Panc1 (cell line): ENCODE measurements at regions of chr7 and their contacts with region 1.

Region 1: DNA sequence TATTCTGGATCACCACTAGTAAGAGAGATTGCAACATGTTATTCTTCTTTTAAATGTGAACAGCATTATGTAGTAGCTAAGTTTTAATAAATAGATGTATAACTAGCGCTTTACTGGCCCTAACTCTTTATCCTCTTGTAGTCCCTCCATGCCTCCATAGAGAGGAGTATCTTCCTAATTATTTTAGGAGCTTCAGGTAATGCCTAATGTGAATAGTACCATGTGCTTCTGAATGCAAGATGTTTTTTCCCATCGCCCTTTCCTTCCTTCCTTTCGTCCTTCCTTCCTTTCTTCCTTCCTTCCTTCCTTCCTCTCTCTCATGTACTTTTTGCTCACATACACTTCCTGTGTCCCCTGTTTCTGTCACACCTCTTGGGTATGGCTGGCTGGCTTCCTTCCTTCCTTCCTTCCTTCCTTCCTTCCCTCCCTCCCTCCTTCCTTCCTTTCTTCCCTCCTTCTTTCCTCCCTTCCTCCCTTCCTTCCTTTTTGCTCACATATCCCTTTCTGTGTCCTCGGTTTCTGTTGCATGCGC is 290.7 kb downstream of the HDAC9 start:
- DNase-seq: no peak
- ATAC-seq: no peak
- H3K4me3 ChIP-seq: no peak overlapping the region
- H3K27ac ChIP-seq: no peak overlapping the region
- H3K4me1 ChIP-seq: no peaks in the 10 kb centered on the region
- H3K27me3 ChIP-seq: no peaks in the 10 kb centered on the region
- CTCF ChIP-seq: no peak

Region 2: GRCh38 chr7:18913106-18913505 is 126.8 kb after region 1 on chr7:
- CTCF ChIA-PET with region 1: no interaction called
- POLR2A ChIA-PET with region 1: interaction called, 10 read pairs
- in situ Hi-C with region 1: no loop called
- intact Hi-C with region 1: no loop called
- DNase-seq: no peak
- ATAC-seq: no peak
- H3K4me3 ChIP-seq: no peak overlapping the region
- H3K27ac ChIP-seq: no peak overlapping the region
- H3K4me1 ChIP-seq: no peaks in the 10 kb centered on the region
- H3K27me3 ChIP-seq: no peaks in the 10 kb centered on the region
- CTCF ChIP-seq: no peak